ENCODE measurements at regions of chr11 and their contacts with region 1.

Region 1: DNA sequence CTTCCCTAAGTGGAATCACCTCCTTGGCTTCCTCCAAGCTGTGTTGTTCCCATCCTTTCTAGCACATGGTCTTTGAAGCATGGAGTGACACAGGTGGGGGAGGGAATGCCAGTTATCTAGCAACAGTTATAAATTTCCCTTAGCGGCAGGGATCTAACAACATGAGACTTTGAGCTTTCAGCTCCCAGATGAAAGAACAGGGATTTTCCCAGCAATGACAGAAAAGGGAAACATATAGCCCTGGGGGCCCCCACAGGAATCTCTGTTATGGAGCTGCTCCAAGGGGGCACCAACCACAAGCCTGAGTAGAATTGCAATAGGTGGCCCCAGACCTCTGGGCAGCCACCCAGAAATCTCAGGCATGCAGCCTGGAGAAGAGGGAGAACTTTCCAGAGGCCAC is 163.0 kb downstream of the GRIK4 start:
- DNase-seq: no peak
- H3K4me3 ChIP-seq: no peak overlapping the region
- H3K27ac ChIP-seq: no peak overlapping the region
- H3K4me1 ChIP-seq: no peaks in the 10 kb centered on the region
- H3K27me3 ChIP-seq: peaks cover 42% of the 10 kb centered on the region
- CTCF ChIP-seq: no peak

Region 2: GRCh38 chr11:120344302-120345004 is 330.1 kb before region 1 on chr11:
- CTCF ChIA-PET with region 1: no interaction called
- POLR2A ChIA-PET with region 1: no interaction called
- intact Hi-C with region 1: no loop called
- DNase-seq: peak; percentile 60
- H3K4me3 ChIP-seq: no peak overlapping the region
- H3K27ac ChIP-seq: peak overlapping the region; percentile 1
- H3K4me1 ChIP-seq: peaks cover 71% of the 10 kb centered on the region
- H3K27me3 ChIP-seq: no peaks in the 10 kb centered on the region
- CTCF ChIP-seq: no peak

Region 3: GRCh38 chr11:120467627-120468026 is 206.9 kb before region 1 on chr11:
- CTCF ChIA-PET with region 1: no interaction called
- POLR2A ChIA-PET with region 1: no interaction called
- intact Hi-C with region 1: no loop called
- DNase-seq: peak; percentile 35
- H3K4me3 ChIP-seq: no peak overlapping the region
- H3K27ac ChIP-seq: no peak overlapping the region
- H3K4me1 ChIP-seq: no peaks in the 10 kb centered on the region
- H3K27me3 ChIP-seq: no peaks in the 10 kb centered on the region
- CTCF ChIP-seq: no peak

Region 4: DNA sequence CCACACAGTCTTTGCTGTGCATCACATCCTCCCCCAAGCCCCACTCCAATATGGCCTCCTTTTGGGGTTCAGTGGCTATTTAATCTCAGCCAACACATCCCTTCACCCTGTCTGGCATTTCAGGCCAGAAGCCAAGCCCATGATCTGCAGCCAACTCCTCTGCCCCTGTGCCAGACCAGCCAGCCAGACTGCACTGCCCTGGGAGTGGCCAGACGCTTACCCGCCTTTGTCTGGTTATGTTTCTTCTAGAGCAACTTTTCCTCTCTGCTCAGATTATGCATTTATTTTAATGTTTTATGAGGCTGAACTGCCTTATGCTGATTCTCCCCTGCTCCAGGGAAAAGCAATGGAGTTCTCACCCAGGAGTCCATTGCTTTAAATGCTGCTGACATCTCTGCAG is 142.6 kb after region 1 on chr11:
- CTCF ChIA-PET with region 1: interaction called, 15 read pairs
- POLR2A ChIA-PET with region 1: no interaction called
- intact Hi-C with region 1: no loop called
- DNase-seq: no peak
- H3K4me3 ChIP-seq: no peak overlapping the region
- H3K27ac ChIP-seq: no peak overlapping the region
- H3K4me1 ChIP-seq: no peaks in the 10 kb centered on the region
- H3K27me3 ChIP-seq: peaks cover 49% of the 10 kb centered on the region
- CTCF ChIP-seq: no peak

Region 5: GRCh38 chr11:120869516-120870011 is 195.0 kb after region 1 on chr11:
- CTCF ChIA-PET with region 1: no interaction called
- POLR2A ChIA-PET with region 1: no interaction called
- intact Hi-C with region 1: no loop called
- DNase-seq: no peak
- H3K4me3 ChIP-seq: no peak overlapping the region
- H3K27ac ChIP-seq: no peak overlapping the region
- H3K4me1 ChIP-seq: no peaks in the 10 kb centered on the region
- H3K27me3 ChIP-seq: peaks cover 23% of the 10 kb centered on the region
- CTCF ChIP-seq: no peak